Heart left ventricle (tissue), 16 donors: ENCODE measurements at regions of chr10 and their contacts with region 1.

Region 1: GRCh38 chr10:101602761-101603398 is 14.8 kb downstream of the DPCD start:
- DNase-seq: peak; percentile 37 to 78 (median 63)
- ATAC-seq: peak; percentile 69 to 89 (median 82)
- H3K4me3 ChIP-seq: no peak overlapping the region
- H3K27ac ChIP-seq: no peak overlapping the region
- H3K4me1 ChIP-seq: peaks cover 0 to 16% (median 4%) of the 10 kb centered on the region in 12 donors
- H3K27me3 ChIP-seq: no peaks in the 10 kb centered on the region
- CTCF ChIP-seq: peak; percentile 69 to 94 (median 83)
- POLR2A ChIP-seq: no peak

Region 2: DNA sequence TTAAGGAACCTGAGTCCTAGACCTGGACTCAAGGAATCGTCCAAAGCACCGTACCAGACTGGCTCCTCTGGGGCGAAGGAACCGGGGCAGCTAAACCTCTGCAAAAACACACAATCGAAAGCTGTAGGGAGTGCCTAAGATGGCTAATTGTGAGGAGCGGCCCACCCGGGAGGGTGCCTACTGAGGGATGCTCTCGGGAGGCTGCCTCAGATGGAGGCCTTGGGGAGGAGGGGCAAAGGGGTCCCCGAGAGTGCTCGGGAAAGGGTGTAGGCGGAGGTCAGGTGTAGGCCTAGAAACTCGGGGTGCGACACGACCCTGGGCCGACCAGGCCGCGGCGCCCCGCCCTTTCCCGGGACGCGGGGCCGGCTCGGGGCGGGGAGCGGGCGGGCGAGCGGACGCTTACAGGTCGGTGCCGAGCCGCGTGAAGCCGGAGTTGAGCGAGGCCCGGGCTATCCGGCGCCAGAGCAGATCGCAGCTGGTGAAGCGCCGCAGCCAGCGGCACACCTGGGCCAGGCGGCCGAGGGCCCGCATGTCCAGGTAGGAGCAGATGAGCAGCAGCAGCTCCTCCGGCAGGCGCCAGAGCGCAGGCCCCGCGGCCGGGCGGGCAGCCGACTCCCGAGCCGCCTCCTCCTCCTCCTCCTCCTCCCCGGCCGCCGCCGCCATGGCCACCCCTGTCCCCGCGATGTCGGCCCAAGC is 91.2 kb after region 1 on chr10:
- intact Hi-C with region 1: loop called in 1 of 10 experiments (anchors 10 kb)
- DNase-seq: peak; percentile 47 to 78 (median 60)
- ATAC-seq: peak; percentile 72 to 90 (median 86)
- H3K4me3 ChIP-seq: peak overlapping the region; percentile 69 to 93 (median 86)
- H3K27ac ChIP-seq: peak overlapping the region; percentile 92 to 99 (median 96)
- H3K4me1 ChIP-seq: peaks cover 0 to 53% (median 41%) of the 10 kb centered on the region in 12 donors
- H3K27me3 ChIP-seq: no peaks in the 10 kb centered on the region
- CTCF ChIP-seq: no peak
- POLR2A ChIP-seq: peak in 1 of 2 donors; percentile 33

Region 3: DNA sequence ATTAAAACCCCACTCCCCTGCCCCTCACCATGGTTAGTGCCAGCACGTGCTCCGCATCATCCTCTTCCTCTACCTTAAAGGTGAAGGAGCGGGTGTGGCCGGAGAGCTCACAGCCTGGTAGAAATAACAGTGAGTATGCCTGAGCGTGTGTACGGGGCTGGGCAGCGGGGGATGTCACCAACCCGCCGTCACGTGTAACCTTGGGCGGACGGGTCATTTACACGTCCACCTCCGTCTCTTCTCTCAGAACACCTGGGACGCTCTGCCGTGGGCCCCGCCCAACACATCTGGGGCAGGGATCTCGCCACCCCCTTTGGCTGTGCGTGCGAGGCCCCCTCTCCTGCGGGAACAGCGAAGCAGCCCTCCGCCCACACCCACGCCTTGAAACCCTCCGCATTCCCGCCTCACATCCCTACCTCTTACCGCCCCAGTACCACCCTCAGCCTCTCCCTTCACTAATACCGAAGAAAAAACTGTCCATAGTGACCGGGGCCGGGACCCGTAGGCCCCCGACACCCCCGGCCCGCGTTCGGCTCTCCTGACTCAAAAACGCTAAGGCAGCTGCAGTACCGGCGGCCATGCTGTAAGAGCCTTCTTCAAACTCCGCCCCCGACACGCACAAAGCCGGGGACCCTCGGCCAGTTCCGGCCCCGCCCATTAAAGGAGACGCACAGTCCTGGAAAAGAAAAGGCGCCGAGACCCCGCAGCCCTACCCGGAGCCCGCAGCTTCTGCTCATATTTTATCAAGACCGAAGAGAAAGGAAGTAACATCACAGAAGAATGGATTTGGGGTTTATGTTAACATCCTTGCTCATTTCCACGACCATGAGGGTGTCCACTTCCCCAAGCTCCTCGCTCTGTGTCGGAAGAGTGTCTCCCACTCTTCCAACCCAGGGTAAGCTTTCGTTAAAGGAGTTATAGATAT is 180.2 kb after region 1 on chr10 and contains the start of gene NPM3:
- intact Hi-C with region 1: loop called (anchors 1 to 5 kb)
- DNase-seq: peak; percentile 81 to 87 (median 85)
- ATAC-seq: peak; percentile 60 to 81 (median 77)
- H3K4me3 ChIP-seq: peak within 1 kb of the TSS; percentile 25 to 84 (median 66)
- H3K27ac ChIP-seq: peak within 1 kb of the TSS in 8 of 12 donors; percentile 20 to 68 (median 40)
- H3K4me1 ChIP-seq: peaks cover 0 to 55% (median 38%) of the 10 kb centered on the region in 12 donors
- H3K27me3 ChIP-seq: peaks cover 0 to 18% (median 5%) of the 10 kb centered on the region in 9 donors
- CTCF ChIP-seq: no peak
- POLR2A ChIP-seq: no peak
- total RNA-seq, gene NPM3: 5.9 to 23.1 (median 8.3) TPM

Region 4: GRCh38 chr10:101889256-101890210 is 286.7 kb after region 1 on chr10:
- intact Hi-C with region 1: no loop called
- DNase-seq: peak; percentile 64 to 79 (median 69)
- ATAC-seq: peak in 2 of 4 donors; percentile 46 to 54
- H3K4me3 ChIP-seq: no peak overlapping the region
- H3K27ac ChIP-seq: peak overlapping the region in 6 of 12 donors; percentile 5 to 75 (median 27)
- H3K4me1 ChIP-seq: peaks cover 0 to 69% (median 9%) of the 10 kb centered on the region in 12 donors
- H3K27me3 ChIP-seq: no peaks in the 10 kb centered on the region
- CTCF ChIP-seq: peak; percentile 60 to 87 (median 78)
- POLR2A ChIP-seq: no peak